OCI-LY7 (cell line): ENCODE measurements at regions of chr19 and their contacts with region 1.

Region 1: DNA sequence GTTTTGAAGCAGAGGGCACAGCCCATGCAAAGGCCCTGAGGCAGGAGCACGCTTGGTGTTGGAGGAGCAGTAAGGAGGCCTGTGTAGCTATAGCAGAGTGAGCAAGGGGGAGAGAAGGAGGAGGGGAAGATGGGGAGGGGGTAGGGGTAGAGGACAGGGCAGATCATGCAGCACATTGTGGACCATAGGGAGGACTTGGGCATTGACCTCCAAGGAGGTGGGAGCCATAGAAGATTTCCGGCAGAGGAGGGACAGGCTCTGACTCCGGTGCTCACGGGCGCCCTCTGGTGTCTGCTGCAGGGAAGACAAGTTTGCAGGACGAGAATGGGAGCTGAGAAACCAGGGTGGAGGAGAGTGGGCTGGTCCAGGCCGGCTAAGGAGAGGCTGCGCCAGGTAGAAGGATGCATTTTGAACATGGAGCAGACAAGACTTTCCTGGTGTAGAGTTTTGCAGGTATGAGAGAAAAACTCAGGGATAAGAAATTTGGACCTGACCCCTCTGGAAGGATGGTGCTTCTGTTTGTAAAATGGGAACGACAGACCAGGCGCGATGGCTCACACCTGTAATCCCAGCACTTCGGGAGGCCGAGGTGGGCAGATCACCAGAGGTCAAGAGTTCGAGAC is 13.7 kb upstream of the CREB3L3 start:
- DNase-seq: peak; percentile 70
- H3K4me3 ChIP-seq: no peak overlapping the region
- H3K27ac ChIP-seq: no peak overlapping the region
- H3K4me1 ChIP-seq: peaks cover 8% of the 10 kb centered on the region
- CTCF ChIP-seq: peak; percentile 86

Region 2: DNA sequence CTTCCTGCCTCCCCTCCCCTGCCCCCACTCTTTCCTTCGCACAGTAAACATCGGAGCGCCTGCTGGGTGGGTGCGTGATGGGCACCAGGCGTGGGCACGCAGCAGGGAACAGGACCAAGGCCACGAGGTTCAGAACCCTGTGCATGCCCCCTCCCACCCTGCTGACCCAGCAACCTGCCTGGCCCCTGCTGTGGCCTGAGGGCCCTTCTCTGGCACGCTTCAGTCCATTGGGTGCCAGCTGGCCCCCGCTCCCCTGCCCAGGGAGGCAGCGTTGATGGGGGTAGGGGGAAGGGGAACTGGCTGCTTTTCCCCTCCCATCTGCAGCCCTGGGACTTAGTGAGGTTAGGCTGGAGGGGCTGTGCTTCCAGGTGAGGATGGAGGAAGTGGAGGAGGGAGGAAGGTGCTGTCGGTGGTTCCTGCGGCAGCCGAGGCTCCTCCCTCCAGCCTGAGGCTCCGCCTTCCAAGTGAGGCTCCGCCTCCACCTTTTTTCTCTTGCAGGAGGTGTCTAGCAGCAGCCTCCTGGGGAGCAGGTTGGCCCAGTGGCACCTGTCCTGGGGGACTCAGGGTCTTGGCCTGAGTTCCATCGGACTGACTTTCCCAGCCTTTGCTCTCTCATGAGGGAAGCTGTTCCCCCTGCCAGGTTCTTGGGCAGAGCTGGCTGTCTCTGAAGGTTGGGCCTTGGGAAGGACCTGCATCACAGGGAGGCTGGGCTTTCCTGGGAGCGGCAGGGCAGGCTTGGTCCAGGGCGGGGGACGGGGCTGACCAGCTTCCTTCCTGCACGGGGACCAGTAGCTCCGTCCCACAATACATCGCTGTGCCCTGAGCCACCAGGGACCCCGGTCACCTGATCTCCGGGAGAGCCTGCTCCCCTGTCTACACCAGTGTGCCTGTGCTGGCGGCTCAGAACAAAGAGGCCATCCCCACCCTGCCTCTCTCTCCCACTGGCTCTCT is 124.9 kb before region 1 on chr19:
- CTCF ChIA-PET with region 1: interaction called, 20 read pairs
- POLR2A ChIA-PET with region 1: no interaction called
- intact Hi-C with region 1: no loop called
- DNase-seq: peak; percentile 14
- H3K4me3 ChIP-seq: no peak overlapping the region
- H3K27ac ChIP-seq: no peak overlapping the region
- H3K4me1 ChIP-seq: no peaks in the 10 kb centered on the region
- CTCF ChIP-seq: no peak

Region 3: GRCh38 chr19:4879041-4879440 is 739.3 kb after region 1 on chr19:
- CTCF ChIA-PET with region 1: no interaction called
- POLR2A ChIA-PET with region 1: no interaction called
- intact Hi-C with region 1: no loop called
- DNase-seq: no peak
- H3K4me3 ChIP-seq: peak overlapping the region; percentile 39
- H3K27ac ChIP-seq: peak overlapping the region; percentile 78
- H3K4me1 ChIP-seq: peaks cover 62% of the 10 kb centered on the region
- CTCF ChIP-seq: 0 out of 2 replicates have a peak, but pooled peaks have one; percentile 3